Left ventricle myocardium inferior (tissue), 1 donor: ENCODE measurements at regions of chr3 and their contacts with region 1.

Region 1: DNA sequence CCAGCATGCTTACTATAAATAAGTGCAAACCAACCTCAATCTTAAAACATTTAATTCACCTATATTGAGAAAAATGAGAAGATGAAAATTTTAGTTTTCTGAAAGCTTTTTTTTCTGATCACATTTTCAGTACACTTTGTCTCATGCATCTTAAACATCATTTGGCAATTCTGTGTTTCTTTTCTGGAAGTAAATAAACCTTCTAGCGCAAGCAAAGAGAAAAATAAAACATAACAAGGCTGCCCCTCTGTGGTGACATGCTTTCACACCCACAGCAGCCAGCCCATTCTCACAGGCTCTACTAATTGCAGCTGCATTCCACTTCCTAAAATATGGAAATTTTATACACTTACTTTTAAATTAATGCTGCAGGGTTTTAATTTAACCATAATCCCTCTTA is 90.1 kb downstream of the NEK10 start:
- DNase-seq: no peak
- H3K4me3 ChIP-seq: no peak overlapping the region
- H3K27ac ChIP-seq: no peak overlapping the region
- H3K4me1 ChIP-seq: peaks cover 13% of the 10 kb centered on the region
- H3K27me3 ChIP-seq: no peaks in the 10 kb centered on the region
- CTCF ChIP-seq: peak; percentile 56

Region 2: DNA sequence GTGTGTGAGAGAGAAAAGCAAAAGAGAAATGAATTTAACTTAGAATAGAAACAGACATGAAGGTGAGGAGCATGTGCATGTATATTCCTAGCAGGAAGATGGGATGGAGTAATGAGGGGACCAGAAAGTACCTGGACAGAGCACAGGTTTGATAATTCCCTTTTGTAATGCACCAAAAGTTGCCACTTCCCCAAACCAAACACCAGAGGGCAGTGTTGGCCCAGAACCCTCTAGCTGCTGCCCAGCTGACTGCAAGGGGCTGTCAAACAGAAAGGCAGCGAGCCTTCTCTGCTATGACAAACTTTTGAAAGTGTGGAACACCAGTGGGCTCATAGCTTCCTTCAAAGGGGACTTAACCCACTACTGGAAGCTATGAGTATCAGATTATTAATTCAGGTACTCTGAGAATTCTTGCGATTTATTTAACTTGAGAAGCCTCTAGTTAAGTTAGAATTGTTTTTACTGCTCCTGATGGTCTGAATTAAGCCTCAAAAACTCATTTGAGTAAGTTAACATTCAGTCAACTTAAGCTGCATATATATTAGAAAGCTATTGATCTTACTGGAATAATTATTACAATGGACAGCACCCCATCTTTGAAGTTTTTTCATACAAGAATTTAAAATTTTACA is 144.8 kb before region 1 on chr3:
- intact Hi-C with region 1: loop called (anchors 10 kb)
- DNase-seq: peak; percentile 49
- H3K4me3 ChIP-seq: no peak overlapping the region
- H3K27ac ChIP-seq: peak overlapping the region; percentile 28
- H3K4me1 ChIP-seq: peaks cover 17% of the 10 kb centered on the region
- H3K27me3 ChIP-seq: no peaks in the 10 kb centered on the region
- CTCF ChIP-seq: peak; percentile 91